Activated CD4-positive, alpha-beta memory T cell treated with anti-CD3 and anti-CD28 coated beads for 36 hours (primary cell): ENCODE measurements at regions of chr21 and their contacts with region 1.

Region 1: DNA sequence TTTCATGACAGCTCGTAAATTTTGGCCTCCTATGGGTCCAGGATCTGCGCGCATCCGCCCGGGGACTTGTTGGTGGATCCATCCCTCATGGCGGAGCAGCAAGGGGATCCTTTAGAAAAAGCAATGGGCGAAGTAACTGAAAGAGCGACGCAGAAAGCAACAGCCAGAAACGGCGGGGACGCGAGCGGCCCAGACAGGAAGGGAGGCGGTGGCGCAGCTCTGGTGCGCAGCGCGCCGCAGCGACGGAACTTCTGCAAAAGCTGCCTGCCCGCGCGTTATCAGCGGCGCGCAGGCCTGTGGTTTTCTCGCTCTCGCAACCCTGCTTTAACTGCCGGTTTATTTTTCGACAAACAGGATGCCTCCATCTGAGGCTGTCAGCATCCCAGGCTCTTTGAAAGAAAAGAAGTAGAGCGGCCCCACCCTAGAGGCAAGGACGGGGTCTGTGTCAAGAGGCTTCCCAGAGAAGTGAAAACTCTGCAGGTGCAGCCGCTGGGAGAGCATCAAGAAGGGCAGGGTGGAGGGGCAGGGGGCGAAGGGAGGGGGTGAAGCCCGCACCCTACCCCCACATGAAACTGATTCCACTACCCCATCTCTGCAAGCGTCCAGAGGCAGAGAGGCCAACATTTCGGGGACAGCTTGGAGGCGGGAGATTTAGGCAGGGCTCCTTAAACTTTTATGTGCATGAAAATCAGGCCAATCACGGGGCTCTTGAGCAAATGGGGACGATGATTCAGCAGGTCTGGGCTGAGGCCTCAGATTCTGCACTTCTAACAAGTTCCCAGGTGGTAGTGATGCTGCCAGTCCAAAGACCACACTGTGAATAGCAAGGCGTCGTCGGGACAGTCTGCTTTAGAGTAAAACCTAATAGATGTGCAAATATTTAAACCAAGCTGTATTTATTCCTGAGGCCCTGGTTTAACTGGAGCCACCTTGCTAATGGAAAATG is 22.2 kb downstream of the RUNX1 start:
- DNase-seq: peak; percentile 89
- H3K4me3 Mint-ChIP-seq: peak overlapping the region; percentile 75
- H3K27ac Mint-ChIP-seq: peak overlapping the region; percentile 91
- H3K4me1 Mint-ChIP-seq: peaks cover 83% of the 10 kb centered on the region
- H3K27me3 Mint-ChIP-seq: no peaks in the 10 kb centered on the region

Region 2: GRCh38 chr21:35045542-35046262 is 18.8 kb after region 1 on chr21:
- CTCF ChIA-PET with region 1: interaction called, 17 read pairs
- POLR2A ChIA-PET with region 1: interaction called, 83 read pairs
- intact Hi-C with region 1: loop called (anchors 1 kb)
- DNase-seq: peak; percentile 69
- H3K4me3 Mint-ChIP-seq: peak overlapping the region; percentile 93
- H3K27ac Mint-ChIP-seq: peak overlapping the region; percentile 99
- H3K4me1 Mint-ChIP-seq: peaks cover 94% of the 10 kb centered on the region
- H3K27me3 Mint-ChIP-seq: no peaks in the 10 kb centered on the region